ENCODE measurements at regions of chr19 and their contacts with region 1.

Region 1: DNA sequence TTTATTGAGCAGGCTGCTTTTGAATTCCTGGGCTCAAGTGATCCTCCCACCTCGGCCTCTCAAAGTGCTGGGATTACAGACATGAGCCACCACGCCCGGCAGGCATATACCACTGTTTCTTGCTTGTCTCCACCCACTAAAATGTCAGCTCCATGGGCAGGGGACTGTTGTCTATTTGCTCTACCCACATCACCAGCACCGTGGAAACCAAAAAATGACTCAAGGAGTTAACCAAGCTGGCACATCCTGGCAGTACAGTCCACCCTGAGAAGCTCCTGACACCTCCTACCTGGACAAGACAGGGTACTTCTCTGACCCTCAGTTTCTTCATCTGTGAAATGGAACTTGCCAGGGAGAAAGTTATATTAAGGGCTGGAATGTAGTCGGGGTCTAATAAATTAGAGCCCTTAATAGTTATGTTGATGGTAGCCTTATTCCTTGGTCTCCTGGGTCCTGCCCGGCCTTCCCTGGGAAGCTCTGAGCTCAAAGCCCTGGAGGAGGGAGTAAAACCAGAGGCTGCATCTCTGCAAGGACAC is 13.9 kb downstream of the RDH8 start:
- DNase-seq: no peak
- H3K4me3 ChIP-seq: peak overlapping the region in 1 of 2 donors; percentile 25
- H3K27ac ChIP-seq: no peak overlapping the region
- H3K4me1 ChIP-seq: peaks cover 0 to 5% of the 10 kb centered on the region in 2 donors
- H3K27me3 ChIP-seq: peaks cover 8% of the 10 kb centered on the region
- CTCF ChIP-seq: no peak

Region 2: DNA sequence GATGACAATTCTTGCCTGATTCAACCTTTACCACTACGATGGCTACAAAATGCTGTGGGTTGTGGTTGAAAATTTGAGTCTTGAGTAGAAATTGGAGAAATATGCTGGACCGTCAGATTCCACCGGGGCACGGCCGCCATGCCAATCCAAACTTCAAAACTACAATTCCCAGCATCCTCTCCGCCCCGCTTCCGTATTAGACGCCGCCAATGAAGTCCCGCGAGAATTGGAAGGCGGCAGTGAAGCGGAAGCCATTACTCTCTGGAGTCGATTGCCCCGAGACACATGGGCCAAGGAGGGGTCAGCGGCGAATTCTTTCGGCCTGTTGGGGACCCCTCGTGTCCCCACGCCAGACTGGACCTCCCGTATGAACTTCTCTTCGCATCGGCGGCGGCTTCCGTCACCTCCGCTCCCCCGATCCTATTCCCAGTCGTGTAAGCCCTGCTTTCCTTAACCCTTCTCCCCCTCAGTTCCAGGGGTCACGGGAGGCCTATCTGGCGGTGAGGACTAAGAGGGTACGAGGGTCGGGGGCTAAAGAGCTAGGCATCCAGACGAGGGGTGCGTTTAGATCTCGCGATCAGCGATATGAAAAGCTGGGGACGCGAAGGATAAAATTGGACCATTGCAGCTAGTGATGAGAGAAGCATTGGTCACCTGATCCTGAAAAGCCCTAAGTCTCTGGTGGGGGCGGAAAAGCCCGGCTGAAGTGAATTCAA is 886.9 kb before region 1 on chr19 and contains the start of gene ZNF317:
- intact Hi-C with region 1: loop called (anchors 5 kb)
- DNase-seq: peak; percentile 87 to 98
- H3K4me3 ChIP-seq: peak within 1 kb of the TSS; percentile 70 to 71
- H3K27ac ChIP-seq: peak within 1 kb of the TSS; percentile 77 to 79
- H3K4me1 ChIP-seq: peaks cover 0 to 12% of the 10 kb centered on the region in 2 donors
- H3K27me3 ChIP-seq: no peaks in the 10 kb centered on the region
- CTCF ChIP-seq: no peak
- total RNA-seq, gene ZNF317: 22.0 TPM

Region 3: DNA sequence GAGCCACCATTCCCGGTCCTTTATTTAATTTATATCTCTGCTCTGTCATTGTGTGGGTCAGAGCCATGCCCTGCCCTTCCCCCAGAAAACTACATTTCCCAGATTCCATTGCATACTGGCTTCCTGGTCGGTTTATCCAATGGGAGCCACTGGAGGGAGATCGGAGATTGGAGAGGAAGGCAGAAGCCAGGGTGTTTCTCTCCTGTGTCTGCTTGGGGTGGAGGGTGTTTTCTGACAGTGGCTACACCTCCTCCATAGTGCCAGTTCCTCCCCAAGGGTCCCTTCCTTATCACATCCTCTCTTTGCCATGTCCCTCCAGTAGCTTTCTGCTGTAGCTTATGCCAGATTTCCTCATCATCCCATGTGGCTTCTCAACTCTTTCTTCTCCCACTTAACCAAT is 109.9 kb before region 1 on chr19:
- intact Hi-C with region 1: no loop called
- DNase-seq: peak in 1 of 2 donors; percentile 64
- H3K4me3 ChIP-seq: no peak overlapping the region
- H3K27ac ChIP-seq: no peak overlapping the region
- H3K4me1 ChIP-seq: peaks cover 0 to 10% of the 10 kb centered on the region in 2 donors
- H3K27me3 ChIP-seq: no peaks in the 10 kb centered on the region
- CTCF ChIP-seq: no peak

Region 4: GRCh38 chr19:9934132-9934950 is 92.9 kb before region 1 on chr19:
- intact Hi-C with region 1: loop called (anchors 1 kb)
- DNase-seq: peak in 1 of 2 donors; percentile 77
- H3K4me3 ChIP-seq: no peak overlapping the region
- H3K27ac ChIP-seq: no peak overlapping the region
- H3K4me1 ChIP-seq: peaks cover 2 to 11% of the 10 kb centered on the region in 2 donors
- H3K27me3 ChIP-seq: peaks cover 9% of the 10 kb centered on the region
- CTCF ChIP-seq: peak; percentile 79 to 81 (median 79)

Region 5: GRCh38 chr19:10000171-10000826 is 26.9 kb before region 1 on chr19:
- intact Hi-C with region 1: loop called (anchors 2 kb)
- DNase-seq: peak in 1 of 2 donors; percentile 80
- H3K4me3 ChIP-seq: no peak overlapping the region
- H3K27ac ChIP-seq: no peak overlapping the region
- H3K4me1 ChIP-seq: no peaks in the 10 kb centered on the region
- H3K27me3 ChIP-seq: no peaks in the 10 kb centered on the region
- CTCF ChIP-seq: peak; percentile 50 to 74 (median 67)